ENCODE measurements at regions of chr19 and their contacts with region 1.

Region 1: DNA sequence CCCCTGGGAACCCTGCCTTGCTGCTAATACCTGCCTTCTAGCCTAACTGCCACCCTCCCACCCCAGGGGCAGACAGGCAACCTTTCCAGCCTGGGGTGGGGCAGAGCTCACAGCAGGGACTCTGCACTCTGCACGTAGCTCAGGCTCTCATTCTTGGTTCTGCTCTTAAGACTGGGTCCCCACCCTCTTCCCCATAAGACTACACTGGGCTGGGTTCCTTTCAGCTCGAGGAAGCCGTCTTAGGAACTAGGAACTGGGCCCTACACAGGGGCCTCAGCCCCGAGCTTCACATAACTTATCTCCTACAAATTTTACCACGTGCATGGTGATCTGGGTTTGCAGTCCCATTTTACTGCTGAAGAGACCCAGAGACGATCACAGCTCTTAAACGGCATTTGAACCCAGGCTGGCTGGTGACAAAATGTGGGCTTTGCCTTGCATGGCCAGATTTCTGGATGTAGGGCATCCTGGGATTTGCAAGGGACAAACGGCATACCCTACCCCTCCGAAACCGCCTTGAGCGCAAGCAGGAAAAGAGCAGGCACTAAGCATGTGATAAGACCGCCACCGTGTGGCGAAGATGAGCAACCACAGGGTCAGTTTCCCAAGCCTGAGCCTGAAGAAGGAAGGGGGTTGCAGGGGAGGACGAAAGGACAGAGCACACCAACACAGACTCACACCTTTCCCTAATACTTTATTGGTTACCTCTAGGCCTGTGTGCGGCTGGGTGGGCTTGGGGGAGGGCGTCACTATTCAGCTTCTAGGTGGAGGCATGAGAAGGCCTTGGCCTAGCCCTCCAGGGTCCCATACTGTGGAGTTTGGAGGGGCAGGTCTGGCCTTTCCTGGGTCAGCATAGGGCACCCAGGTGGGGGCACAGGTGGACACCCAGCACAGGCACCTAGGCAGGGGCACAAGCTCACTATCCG is 5.1 kb downstream of the JUNB start:
- DNase-seq: peak; percentile 83
- H3K4me3 Mint-ChIP-seq: peak overlapping the region; percentile 59
- H3K27ac Mint-ChIP-seq: peak overlapping the region; percentile 93
- H3K4me1 Mint-ChIP-seq: peaks cover 46% of the 10 kb centered on the region
- H3K27me3 Mint-ChIP-seq: peaks cover 4% of the 10 kb centered on the region

Region 2: DNA sequence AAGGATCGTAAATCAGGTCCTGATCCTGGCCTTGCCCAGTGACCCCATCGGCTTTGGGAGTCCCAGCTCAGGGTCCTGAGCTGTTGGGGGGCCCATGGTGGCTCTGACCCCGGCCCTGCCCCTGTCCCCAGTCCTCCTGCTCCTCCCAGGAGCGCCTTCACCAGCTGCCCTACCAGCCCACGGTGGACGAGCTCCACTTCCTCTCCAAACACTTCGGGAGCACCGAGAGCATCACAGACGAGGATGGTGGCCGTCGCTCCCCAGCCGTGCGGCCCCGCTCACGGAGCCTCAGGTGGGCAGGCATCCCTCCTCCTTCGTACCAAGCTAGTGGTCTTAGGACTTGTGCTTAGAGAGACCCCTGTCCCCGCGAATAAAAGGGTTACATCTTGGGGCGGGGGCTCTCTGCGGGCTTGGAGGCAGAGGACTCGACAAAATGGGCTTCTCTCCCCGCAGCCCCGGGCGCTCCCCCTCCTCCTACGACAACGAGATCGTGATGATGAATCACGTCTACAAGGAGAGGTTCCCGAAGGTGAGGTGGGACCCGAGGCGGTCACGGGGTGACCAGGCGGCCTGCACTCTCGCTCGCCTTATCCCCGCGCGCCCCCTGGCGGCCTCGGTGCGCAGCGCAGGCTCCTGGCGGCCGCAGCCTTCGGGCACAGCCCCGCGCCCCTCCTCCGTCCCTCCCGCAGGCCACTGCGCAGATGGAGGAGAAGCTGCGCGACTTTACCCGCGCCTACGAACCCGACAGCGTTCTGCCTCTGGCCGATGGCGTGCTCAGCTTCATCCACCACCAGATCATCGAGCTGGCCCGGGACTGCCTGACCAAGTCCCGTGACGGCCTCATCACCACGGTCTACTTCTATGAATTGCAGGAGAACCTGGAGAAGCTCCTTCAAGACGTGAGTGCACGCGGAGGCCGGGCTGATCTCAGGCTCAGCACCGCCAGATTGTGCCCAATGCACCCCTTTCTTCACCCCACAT is 51.0 kb after region 1 on chr19:
- CTCF ChIA-PET with region 1: interaction called, 24 read pairs
- DNase-seq: peak; percentile 87
- H3K4me3 Mint-ChIP-seq: peak overlapping the region; percentile 12
- H3K27ac Mint-ChIP-seq: no peak overlapping the region
- H3K4me1 Mint-ChIP-seq: peaks cover 9% of the 10 kb centered on the region
- H3K27me3 Mint-ChIP-seq: peaks cover 68% of the 10 kb centered on the region

Region 3: DNA sequence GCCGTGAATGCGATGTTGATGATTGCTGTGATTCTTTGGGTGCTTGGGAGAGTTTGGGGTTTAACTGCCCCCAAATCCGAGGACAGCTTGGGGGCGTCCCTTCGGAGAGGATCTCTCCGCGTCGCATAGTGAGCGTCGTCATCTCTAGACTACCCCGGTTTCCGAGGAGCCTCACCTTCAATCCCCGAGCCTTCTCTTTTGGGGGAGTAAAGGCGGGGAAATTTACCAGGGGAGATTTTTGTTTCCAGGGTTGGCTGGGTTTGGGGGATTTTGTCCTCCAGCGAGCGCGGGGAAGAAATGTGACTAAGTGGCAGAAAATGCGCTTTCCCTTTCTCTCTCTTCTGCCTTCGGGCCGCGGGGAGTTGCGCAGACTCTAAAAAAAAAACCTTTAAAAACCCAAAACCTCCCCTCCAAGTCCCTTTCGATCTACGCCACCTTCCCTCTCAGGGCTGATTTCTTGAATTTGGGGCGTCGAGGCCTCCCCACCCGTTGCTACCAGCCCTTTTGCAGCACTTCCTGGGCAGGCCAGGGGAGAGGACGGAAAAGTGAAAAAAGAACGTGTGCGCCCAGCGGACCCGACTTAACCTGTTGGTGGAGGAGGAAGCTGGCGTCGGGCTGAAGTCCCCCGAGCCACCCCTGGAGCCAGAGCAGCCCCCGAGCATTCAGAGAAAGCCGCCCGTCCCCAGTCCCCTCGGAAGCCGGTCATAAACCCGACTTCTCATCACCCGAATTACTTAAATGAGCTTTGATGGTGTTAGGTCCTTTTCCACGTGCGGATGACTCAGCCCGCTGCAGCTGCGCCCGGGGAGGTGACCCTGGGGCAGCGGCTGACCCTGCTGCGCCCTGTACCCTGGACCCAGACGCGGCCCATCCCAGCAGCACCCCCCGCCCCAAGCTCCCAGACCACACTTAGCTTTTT is 216.5 kb after region 1 on chr19:
- CTCF ChIA-PET with region 1: no interaction called
- DNase-seq: peak; percentile 51
- H3K4me3 Mint-ChIP-seq: peak overlapping the region; percentile 56
- H3K27ac Mint-ChIP-seq: peak overlapping the region; percentile 7
- H3K4me1 Mint-ChIP-seq: peaks cover 23% of the 10 kb centered on the region
- H3K27me3 Mint-ChIP-seq: peaks cover 100% of the 10 kb centered on the region